ENCODE measurements at regions of chr2 and their contacts with region 1.

Region 1: DNA sequence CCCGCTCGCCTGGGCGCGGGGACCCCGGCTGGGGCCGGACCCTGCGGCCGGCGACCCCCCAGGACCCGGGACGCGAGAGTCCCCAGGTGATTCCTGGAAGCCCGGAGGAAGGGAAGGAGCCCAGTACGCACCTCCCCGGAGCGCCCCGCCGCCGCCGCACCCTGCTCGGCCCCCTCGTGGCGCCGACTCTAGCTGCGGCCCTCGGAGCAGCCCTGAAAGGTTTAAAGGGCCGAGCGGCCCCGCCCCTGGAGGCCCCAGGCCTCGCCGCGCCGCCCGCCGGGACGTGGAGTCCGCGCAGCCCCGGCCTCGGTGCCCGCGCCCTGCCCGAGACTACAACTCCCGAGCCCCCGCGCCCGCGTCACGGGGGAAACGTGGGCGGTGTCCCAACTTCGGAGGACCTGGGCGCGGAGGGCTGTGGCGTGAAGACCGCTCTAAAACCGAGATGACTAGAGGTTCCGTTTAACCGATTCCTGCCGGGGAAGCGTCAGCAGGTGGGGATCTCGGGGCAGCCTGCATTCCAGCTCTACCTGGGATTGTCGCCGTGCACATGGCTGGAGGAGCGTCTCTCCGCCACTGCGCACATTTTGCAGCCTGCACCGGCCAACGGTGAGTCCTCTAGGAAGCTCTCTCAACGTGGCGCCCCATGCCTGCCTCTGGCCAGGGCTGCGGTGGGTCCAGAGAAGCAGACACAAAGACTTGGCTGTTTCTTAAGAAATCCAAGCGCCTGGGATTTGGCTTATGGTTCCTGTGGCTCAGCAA is at the start of gene TMEM150A:
- DNase-seq: peak; percentile 81 to 85 (median 82)
- H3K4me3 ChIP-seq: peak within 1 kb of the TSS; percentile 66 to 95
- H3K4me3 Mint-ChIP-seq: peak within 1 kb of the TSS; percentile 88 to 94 (median 90)
- H3K27ac ChIP-seq: peak within 1 kb of the TSS; percentile 62
- H3K27ac Mint-ChIP-seq: peak within 1 kb of the TSS; percentile 82 to 96 (median 90)
- H3K4me1 ChIP-seq: peaks cover 28% of the 10 kb centered on the region
- H3K4me1 Mint-ChIP-seq: peaks cover 14 to 49% (median 34%) of the 10 kb centered on the region in 4 donors
- H3K27me3 ChIP-seq: no peaks in the 10 kb centered on the region
- H3K27me3 Mint-ChIP-seq: no peaks in the 10 kb centered on the region
- total RNA-seq, gene TMEM150A: 13.3 to 14.3 TPM

Region 2: DNA sequence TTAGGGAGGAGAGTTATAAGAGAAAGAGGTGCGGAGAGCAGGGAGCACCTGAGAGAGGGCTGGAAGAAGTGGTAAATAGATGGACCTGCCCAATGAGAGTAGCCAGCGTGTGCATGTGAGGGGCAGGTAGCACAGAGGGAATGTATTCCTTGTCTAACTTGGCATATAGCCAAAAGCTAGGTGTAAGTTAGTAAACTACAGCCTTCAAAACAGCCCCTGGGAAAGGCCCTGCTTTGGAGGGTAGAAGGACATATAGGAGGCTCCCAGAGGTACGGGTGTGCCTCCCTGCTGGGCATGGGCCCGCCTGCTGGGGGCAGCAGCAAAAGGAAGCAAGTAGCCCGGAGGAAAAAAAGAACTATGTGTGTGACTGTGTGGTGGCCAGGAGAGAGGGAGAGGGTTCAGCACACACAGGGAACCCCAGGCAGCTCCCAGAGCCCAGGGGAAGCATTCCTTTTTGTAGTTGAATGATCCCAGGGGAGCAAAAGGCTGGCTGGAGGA is 421.5 kb before region 1 on chr2:
- CTCF ChIA-PET with region 1: no interaction called
- POLR2A ChIA-PET with region 1: no interaction called
- intact Hi-C with region 1: no loop called
- DNase-seq: no peak
- H3K4me3 ChIP-seq: no peak overlapping the region
- H3K4me3 Mint-ChIP-seq: no peak overlapping the region
- H3K27ac ChIP-seq: no peak overlapping the region
- H3K27ac Mint-ChIP-seq: peak overlapping the region in 2 of 7 donors; percentile 35 to 45
- H3K4me1 ChIP-seq: no peaks in the 10 kb centered on the region
- H3K4me1 Mint-ChIP-seq: peaks cover 0 to 4% (median 1%) of the 10 kb centered on the region in 4 donors
- H3K27me3 ChIP-seq: no peaks in the 10 kb centered on the region
- H3K27me3 Mint-ChIP-seq: peaks cover 2 to 8% of the 10 kb centered on the region in 2 donors

Region 3: GRCh38 chr2:85577386-85578242 is 25.0 kb before region 1 on chr2 and contains the start of gene VAMP8:
- CTCF ChIA-PET with region 1: no interaction called
- POLR2A ChIA-PET with region 1: interaction called, 50 read pairs
- intact Hi-C with region 1: loop called (anchors 2 kb)
- DNase-seq: peak; percentile 48 to 75 (median 57)
- H3K4me3 ChIP-seq: peak within 1 kb of the TSS; percentile 62 to 86
- H3K4me3 Mint-ChIP-seq: peak within 1 kb of the TSS; percentile 90 to 98 (median 96)
- H3K27ac ChIP-seq: peak within 1 kb of the TSS; percentile 76
- H3K27ac Mint-ChIP-seq: peak within 1 kb of the TSS; percentile 86 to 98 (median 93)
- H3K4me1 ChIP-seq: peaks cover 30% of the 10 kb centered on the region
- H3K4me1 Mint-ChIP-seq: peaks cover 20 to 48% (median 36%) of the 10 kb centered on the region in 4 donors
- H3K27me3 ChIP-seq: no peaks in the 10 kb centered on the region
- H3K27me3 Mint-ChIP-seq: no peaks in the 10 kb centered on the region
- total RNA-seq, gene VAMP8: 98.5 to 107 TPM

Measured in CD4-positive, alpha-beta memory T cell (primary cell).